ENCODE measurements at regions of chr1 and their contacts with region 1.

Region 1: GRCh38 chr1:226034482-226034881 is 28.0 kb upstream of the H3-3A start:
- DNase-seq: no peak
- ATAC-seq: peak; percentile 55
- H3K4me3 Mint-ChIP-seq: no peak overlapping the region
- H3K27ac Mint-ChIP-seq: no peak overlapping the region
- H3K4me1 Mint-ChIP-seq: peaks cover 30% of the 10 kb centered on the region
- H3K27me3 Mint-ChIP-seq: no peaks in the 10 kb centered on the region
- CTCF ChIP-seq: no peak

Region 2: DNA sequence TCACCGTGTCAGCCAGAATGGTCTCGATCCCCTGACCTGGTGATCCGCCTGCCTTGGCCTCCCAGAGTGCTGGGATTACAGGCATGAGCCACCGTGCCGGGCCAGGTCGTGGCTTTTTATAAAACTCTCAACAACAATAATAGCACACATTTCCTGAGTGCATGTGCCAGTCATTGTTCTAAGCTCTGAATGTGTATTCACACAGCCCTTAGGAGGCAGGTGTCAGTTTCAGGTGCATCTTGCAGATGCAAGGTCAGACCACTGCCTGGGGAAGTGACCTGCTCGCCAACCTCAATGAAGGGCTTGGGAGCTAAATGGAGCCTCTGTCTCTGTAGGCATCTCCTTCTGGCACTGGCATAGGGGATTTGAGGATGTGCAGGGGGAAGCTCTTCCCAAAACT is 91.9 kb before region 1 on chr1:
- CTCF ChIA-PET with region 1: no interaction called
- POLR2A ChIA-PET with region 1: no interaction called
- intact Hi-C with region 1: no loop called
- DNase-seq: no peak
- ATAC-seq: no peak
- H3K4me3 Mint-ChIP-seq: no peak overlapping the region
- H3K27ac Mint-ChIP-seq: no peak overlapping the region
- H3K4me1 Mint-ChIP-seq: peaks cover 9% of the 10 kb centered on the region
- H3K27me3 Mint-ChIP-seq: peaks cover 11% of the 10 kb centered on the region
- CTCF ChIP-seq: no peak

Region 3: DNA sequence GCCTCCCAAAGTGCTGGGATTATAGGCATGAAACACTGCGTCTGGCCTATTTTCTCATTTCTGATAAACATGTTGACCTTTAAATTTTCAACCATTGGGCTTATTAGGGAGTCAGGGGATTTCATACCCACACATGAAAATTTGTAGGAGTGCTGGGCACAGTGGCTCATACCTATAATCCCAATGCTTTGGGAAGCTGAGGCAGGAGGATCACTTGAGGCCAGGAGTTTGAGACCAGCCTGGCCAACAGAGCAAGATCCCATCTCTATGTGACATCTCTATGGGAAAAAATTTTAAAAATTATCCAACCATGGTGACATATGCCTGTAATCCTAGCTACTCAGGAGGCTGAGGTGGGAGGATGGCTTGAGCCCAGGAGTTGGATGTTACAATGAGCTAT is 17.6 kb after region 1 on chr1:
- CTCF ChIA-PET with region 1: no interaction called
- POLR2A ChIA-PET with region 1: interaction called, 5 read pairs
- intact Hi-C with region 1: loop called (anchors 2 kb)
- DNase-seq: no peak
- ATAC-seq: no peak
- H3K4me3 Mint-ChIP-seq: no peak overlapping the region
- H3K27ac Mint-ChIP-seq: no peak overlapping the region
- H3K4me1 Mint-ChIP-seq: no peaks in the 10 kb centered on the region
- H3K27me3 Mint-ChIP-seq: no peaks in the 10 kb centered on the region
- CTCF ChIP-seq: no peak

Region 4: DNA sequence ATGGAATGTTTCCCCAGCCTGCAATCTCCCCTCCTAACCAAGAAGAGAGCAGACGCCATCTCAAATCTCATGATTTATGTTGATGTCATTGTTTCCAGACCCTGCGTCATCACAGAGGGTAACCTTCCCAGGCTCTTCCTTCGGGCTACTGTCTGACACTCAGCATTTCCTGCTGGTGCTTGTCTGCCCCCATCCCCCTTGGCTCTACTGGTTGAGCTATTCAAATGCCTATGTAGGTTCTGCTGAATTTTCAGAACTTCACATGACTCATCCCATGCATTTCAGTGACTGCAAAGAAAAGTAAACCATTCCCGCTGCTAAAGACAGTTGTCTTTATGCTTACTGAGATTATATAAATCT is 729.4 kb after region 1 on chr1:
- CTCF ChIA-PET with region 1: no interaction called
- POLR2A ChIA-PET with region 1: no interaction called
- intact Hi-C with region 1: no loop called
- DNase-seq: no peak
- ATAC-seq: no peak
- H3K4me3 Mint-ChIP-seq: no peak overlapping the region
- H3K27ac Mint-ChIP-seq: no peak overlapping the region
- H3K4me1 Mint-ChIP-seq: peaks cover 5% of the 10 kb centered on the region
- H3K27me3 Mint-ChIP-seq: peaks cover 15% of the 10 kb centered on the region
- CTCF ChIP-seq: no peak

Measured in activated B cell treated with CpG ODN at 0.5 μM for 24 hours (primary cell).